H1 (cell line): ENCODE measurements at regions of chr11 and their contacts with region 1.

Region 1: GRCh38 chr11:134275534-134276395 is at the start of gene GLB1L3:
- DNase-seq: peak in 1 of 2 experiments; percentile 85
- H3K4me3 ChIP-seq: peak within 1 kb of the TSS; percentile 88 to 92 (median 90)
- H3K27ac ChIP-seq: no peak within 1 kb of the TSS
- H3K4me1 ChIP-seq: peaks cover 8 to 17% (median 14%) of the 10 kb centered on the region in 4 experiments
- H3K27me3 ChIP-seq: peaks cover 0 to 7% (median 0%) of the 10 kb centered on the region in 4 experiments; a peak in 3 of 7 replicates
- CTCF ChIP-seq: peak; percentile 34 to 56 (median 44); a peak in 3 of 4 replicates
- EP300 ChIP-seq: no peak
- POLR2A ChIP-seq: no peak; a peak in 1 of 3 replicates
- RAD21 ChIP-seq: peak in 1 of 2 experiments; percentile 10; a peak in 1 of 4 replicates
- total RNA-seq, gene GLB1L3: 32.6 and 33.2 TPM in 2 replicates

Region 2: DNA sequence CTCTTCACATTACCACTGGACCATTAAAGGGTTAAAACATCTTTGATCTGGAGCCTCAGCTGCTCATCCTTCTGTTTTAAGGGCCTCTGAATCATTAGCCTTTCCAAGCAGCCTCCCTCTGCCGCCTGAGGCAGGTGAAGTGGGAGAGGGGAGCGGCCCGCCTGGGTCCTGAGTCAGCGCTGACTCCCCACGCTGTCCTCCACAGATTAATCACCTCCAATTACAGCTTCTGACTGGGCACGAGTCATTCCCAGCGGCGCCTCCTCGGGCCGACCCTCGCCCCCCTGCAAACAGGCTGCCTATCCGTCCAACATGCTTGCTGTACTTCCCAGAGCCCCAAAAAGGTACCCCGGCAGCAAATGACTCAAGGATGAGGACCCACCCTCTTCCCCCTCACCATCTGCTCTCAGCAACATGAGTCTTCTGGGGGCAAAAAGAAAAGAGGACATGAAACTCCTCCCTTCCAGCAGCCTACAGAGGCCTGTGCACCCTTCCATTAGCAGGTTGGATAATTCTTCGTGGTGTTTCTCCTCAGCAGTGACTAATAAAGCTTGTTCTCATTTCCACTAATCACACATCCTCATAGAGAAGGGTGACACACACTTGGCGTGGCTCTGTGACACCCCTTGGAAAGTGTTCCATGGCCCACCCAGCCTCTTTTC is 251.2 kb before region 1 on chr11:
- CTCF ChIA-PET with region 1: no interaction called
- POLR2A ChIA-PET with region 1: no interaction called
- DNase-seq: no peak
- H3K4me3 ChIP-seq: no peak overlapping the region
- H3K27ac ChIP-seq: no peak overlapping the region
- H3K4me1 ChIP-seq: peaks cover 0 to 9% (median 2%) of the 10 kb centered on the region in 4 experiments; a peak in 3 of 7 replicates
- H3K27me3 ChIP-seq: no peaks in the 10 kb centered on the region
- CTCF ChIP-seq: no peak
- EP300 ChIP-seq: no peak
- POLR2A ChIP-seq: no peak
- RAD21 ChIP-seq: no peak

Region 3: GRCh38 chr11:134223836-134224709 is 51.7 kb before region 1 on chr11 and contains the starts of genes NCAPD3 and VPS26B:
- CTCF ChIA-PET with region 1: interaction called, 3 read pairs
- POLR2A ChIA-PET with region 1: interaction called, 11 read pairs
- DNase-seq: peak; percentile 86 to 96
- H3K4me3 ChIP-seq: peak within 1 kb of the TSS; percentile 75 to 97 (median 86)
- H3K27ac ChIP-seq: no peak within 1 kb of the TSS
- H3K4me1 ChIP-seq: peaks cover 0 to 5% (median 3%) of the 10 kb centered on the region in 4 experiments
- H3K27me3 ChIP-seq: peaks cover 0 to 6% (median 0%) of the 10 kb centered on the region in 4 experiments; a peak in 1 of 7 replicates
- CTCF ChIP-seq: no peak; a peak in 1 of 4 replicates
- EP300 ChIP-seq: no peak
- POLR2A ChIP-seq: no peak; a peak in 1 of 3 replicates
- RAD21 ChIP-seq: no peak
- total RNA-seq, gene NCAPD3: 50.3 and 55.2 TPM in 2 replicates
- total RNA-seq, gene VPS26B: 26.8 and 27.0 TPM in 2 replicates

Region 4: GRCh38 chr11:134253188-134253993 is 22.4 kb before region 1 on chr11 and contains the starts of genes ACAD8 and THYN1:
- CTCF ChIA-PET with region 1: interaction called, 5 read pairs
- POLR2A ChIA-PET with region 1: interaction called, 17 read pairs
- DNase-seq: peak; percentile 92 to 94
- H3K4me3 ChIP-seq: peak within 1 kb of the TSS; percentile 75 to 88 (median 81)
- H3K27ac ChIP-seq: no peak within 1 kb of the TSS; the same call in 1 of the 2 replicates
- H3K4me1 ChIP-seq: peaks cover 0 to 7% (median 2%) of the 10 kb centered on the region in 4 experiments; a peak in 3 of 7 replicates
- H3K27me3 ChIP-seq: no peaks in the 10 kb centered on the region
- CTCF ChIP-seq: no peak
- EP300 ChIP-seq: no peak; a peak in 1 of 3 replicates
- POLR2A ChIP-seq: peak; percentile 38 to 73
- RAD21 ChIP-seq: no peak; a peak in 1 of 4 replicates
- total RNA-seq, gene ACAD8: 48.2 and 52.7 TPM in 2 replicates
- total RNA-seq, gene THYN1: 95.1 and 95.4 TPM in 2 replicates

Region 5: GRCh38 chr11:134289789-134290188 is 14.0 kb after region 1 on chr11:
- CTCF ChIA-PET with region 1: interaction called, 11 read pairs
- POLR2A ChIA-PET with region 1: interaction called, 42 read pairs
- DNase-seq: no peak
- H3K4me3 ChIP-seq: no peak overlapping the region
- H3K27ac ChIP-seq: no peak overlapping the region
- H3K4me1 ChIP-seq: no peaks in the 10 kb centered on the region; a peak in 1 of 7 replicates
- H3K27me3 ChIP-seq: no peaks in the 10 kb centered on the region; a peak in 1 of 7 replicates
- CTCF ChIP-seq: no peak
- EP300 ChIP-seq: no peak
- POLR2A ChIP-seq: no peak
- RAD21 ChIP-seq: no peak

Region 6: DNA sequence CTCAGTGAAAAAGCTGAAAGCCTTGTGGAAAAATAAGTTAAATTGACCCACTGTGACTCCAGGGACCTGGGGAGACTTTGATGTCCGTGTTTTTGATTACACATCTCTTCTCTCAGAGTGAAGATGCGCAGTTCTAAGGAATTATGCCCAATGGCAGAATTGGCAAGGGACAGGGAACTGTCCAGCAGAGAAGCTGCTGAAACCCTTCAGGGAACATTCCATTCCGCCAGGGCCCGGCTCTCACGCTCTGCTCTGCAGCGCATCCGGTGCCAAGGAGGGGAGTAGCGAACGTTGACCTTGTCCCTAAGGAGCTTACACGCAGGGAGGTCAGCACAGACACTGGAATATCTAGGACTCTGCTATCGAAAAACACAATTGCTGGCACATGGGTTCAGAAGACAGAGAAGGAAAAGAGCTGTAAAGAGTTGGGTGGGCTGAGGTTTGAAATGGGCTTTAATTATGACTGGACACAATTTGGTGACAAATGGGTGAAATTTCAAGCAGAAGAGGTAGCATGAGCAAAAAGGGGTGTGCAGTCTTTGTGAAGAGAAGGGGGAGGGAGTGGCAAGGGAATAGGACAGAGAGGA is 200.8 kb after region 1 on chr11:
- CTCF ChIA-PET with region 1: no interaction called
- POLR2A ChIA-PET with region 1: no interaction called
- DNase-seq: peak; percentile 38 to 78
- H3K4me3 ChIP-seq: no peak overlapping the region
- H3K27ac ChIP-seq: no peak overlapping the region
- H3K4me1 ChIP-seq: peaks cover 4 to 18% (median 11%) of the 10 kb centered on the region in 4 experiments
- H3K27me3 ChIP-seq: 0 out of 7 replicates have a peak, but pooled peaks cover 0 to 4% (median 0%) of the 10 kb centered on the region in 4 experiments
- CTCF ChIP-seq: no peak
- EP300 ChIP-seq: no peak
- POLR2A ChIP-seq: no peak
- RAD21 ChIP-seq: peak in 1 of 2 experiments; percentile 8; a peak in 1 of 4 replicates